ENCODE measurements at regions of chr13 and their contacts with region 1.

Region 1: GRCh38 chr13:102325321-102325720 is 76.5 kb downstream of the FGF14 start:
- DNase-seq: peak; percentile 83
- H3K4me3 ChIP-seq: peak overlapping the region; percentile 10
- H3K27ac ChIP-seq: peak overlapping the region; percentile 92
- H3K4me1 ChIP-seq: peaks cover 86% of the 10 kb centered on the region
- H3K27me3 ChIP-seq: no peaks in the 10 kb centered on the region
- CTCF ChIP-seq: no peak

Region 2: GRCh38 chr13:101144808-101145419 is 1180.4 kb before region 1 on chr13:
- CTCF ChIA-PET with region 1: no interaction called
- POLR2A ChIA-PET with region 1: no interaction called
- intact Hi-C with region 1: loop called (anchors 5 kb)
- DNase-seq: peak; percentile 75
- H3K4me3 ChIP-seq: no peak overlapping the region
- H3K27ac ChIP-seq: no peak overlapping the region
- H3K4me1 ChIP-seq: no peaks in the 10 kb centered on the region
- H3K27me3 ChIP-seq: no peaks in the 10 kb centered on the region
- CTCF ChIP-seq: peak; percentile 71

Region 3: DNA sequence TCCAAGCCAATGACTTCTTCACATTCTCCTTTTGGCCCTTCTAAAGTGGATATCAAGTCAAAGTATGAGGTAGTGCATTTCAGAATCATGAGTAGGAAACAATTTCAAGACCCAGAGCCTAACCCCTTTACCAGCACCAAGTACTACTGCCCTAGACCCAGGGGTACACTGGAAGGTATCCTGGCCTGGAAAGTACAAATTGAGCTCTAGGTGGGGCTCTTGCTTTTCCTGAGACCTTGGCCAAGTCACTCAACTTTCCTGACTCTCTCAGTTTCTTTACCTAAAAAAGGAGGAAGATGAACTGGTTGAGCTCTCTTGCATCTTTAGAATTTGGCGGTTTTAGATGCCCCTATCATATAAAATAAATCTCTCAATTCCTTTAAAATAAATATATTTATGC is 128.1 kb before region 1 on chr13:
- CTCF ChIA-PET with region 1: no interaction called
- POLR2A ChIA-PET with region 1: no interaction called
- intact Hi-C with region 1: loop called (anchors 1 kb)
- DNase-seq: peak; percentile 78
- H3K4me3 ChIP-seq: no peak overlapping the region
- H3K27ac ChIP-seq: no peak overlapping the region
- H3K4me1 ChIP-seq: peaks cover 29% of the 10 kb centered on the region
- H3K27me3 ChIP-seq: no peaks in the 10 kb centered on the region
- CTCF ChIP-seq: peak; percentile 64

Region 4: GRCh38 chr13:102255409-102255808 is 69.9 kb before region 1 on chr13:
- CTCF ChIA-PET with region 1: interaction called, 12 read pairs
- POLR2A ChIA-PET with region 1: no interaction called
- intact Hi-C with region 1: no loop called
- DNase-seq: peak; percentile 13
- H3K4me3 ChIP-seq: no peak overlapping the region
- H3K27ac ChIP-seq: no peak overlapping the region
- H3K4me1 ChIP-seq: peaks cover 9% of the 10 kb centered on the region
- H3K27me3 ChIP-seq: no peaks in the 10 kb centered on the region
- CTCF ChIP-seq: no peak

Region 5: GRCh38 chr13:102460801-102461200 is 135.5 kb after region 1 on chr13:
- CTCF ChIA-PET with region 1: no interaction called
- POLR2A ChIA-PET with region 1: no interaction called
- intact Hi-C with region 1: loop called (anchors 1 kb)
- DNase-seq: no peak
- H3K4me3 ChIP-seq: no peak overlapping the region
- H3K27ac ChIP-seq: no peak overlapping the region
- H3K4me1 ChIP-seq: peaks cover 6% of the 10 kb centered on the region
- H3K27me3 ChIP-seq: no peaks in the 10 kb centered on the region
- CTCF ChIP-seq: no peak